Sciatic nerve (tissue), 2 donors: ENCODE measurements at regions of chr10 and their contacts with region 1.

Region 1: DNA sequence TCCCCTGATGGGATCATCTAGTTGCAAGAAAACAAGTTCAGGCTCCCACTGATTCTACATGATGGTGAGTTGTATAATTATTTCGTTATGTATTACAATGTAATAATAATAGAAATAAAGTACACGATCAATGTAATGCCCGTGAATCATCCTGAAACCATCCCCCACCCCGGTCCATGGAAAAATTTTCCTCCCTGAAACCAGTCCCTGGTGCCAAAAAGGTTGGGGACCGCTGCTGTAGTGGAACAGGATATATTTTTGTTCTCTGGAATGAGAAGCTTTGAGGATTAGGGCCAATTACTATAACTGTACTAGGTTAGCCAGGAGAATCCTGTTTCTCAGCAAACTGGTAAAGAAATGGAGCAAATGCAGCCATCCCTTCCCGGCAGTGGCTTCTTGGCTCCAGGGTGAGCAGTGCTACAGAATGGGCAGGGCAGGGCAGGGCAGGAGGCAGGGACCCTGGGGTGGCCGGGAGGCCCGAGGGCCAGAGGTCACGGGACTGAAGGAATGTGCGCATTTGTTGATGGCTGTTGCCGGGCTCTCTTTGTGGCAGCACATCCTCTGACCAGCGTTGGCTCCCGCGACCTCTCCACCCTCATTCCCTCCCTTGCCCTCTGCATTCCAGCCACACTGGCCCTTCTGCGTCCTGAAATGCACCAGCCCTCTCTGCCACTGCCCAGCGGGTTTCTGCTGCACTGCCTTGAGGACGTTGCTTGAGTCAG is 162.3 kb upstream of the NPS start:
- DNase-seq: no peak
- ATAC-seq: no peak

Region 2: GRCh38 chr10:127441350-127442219 is 54.8 kb after region 1 on chr10:
- intact Hi-C with region 1: loop called (anchors 2 kb)
- DNase-seq: no peak
- ATAC-seq: no peak